ENCODE measurements at regions of chr9 and their contacts with region 1.

Region 1: GRCh38 chr9:5909976-5910375 is 19.3 kb downstream of the MLANA start:
- DNase-seq: no peak
- H3K4me3 Mint-ChIP-seq: peak overlapping the region; percentile 32
- H3K27ac Mint-ChIP-seq: peak overlapping the region; percentile 89
- H3K4me1 Mint-ChIP-seq: peaks cover 29% of the 10 kb centered on the region
- H3K27me3 Mint-ChIP-seq: no peaks in the 10 kb centered on the region

Region 2: DNA sequence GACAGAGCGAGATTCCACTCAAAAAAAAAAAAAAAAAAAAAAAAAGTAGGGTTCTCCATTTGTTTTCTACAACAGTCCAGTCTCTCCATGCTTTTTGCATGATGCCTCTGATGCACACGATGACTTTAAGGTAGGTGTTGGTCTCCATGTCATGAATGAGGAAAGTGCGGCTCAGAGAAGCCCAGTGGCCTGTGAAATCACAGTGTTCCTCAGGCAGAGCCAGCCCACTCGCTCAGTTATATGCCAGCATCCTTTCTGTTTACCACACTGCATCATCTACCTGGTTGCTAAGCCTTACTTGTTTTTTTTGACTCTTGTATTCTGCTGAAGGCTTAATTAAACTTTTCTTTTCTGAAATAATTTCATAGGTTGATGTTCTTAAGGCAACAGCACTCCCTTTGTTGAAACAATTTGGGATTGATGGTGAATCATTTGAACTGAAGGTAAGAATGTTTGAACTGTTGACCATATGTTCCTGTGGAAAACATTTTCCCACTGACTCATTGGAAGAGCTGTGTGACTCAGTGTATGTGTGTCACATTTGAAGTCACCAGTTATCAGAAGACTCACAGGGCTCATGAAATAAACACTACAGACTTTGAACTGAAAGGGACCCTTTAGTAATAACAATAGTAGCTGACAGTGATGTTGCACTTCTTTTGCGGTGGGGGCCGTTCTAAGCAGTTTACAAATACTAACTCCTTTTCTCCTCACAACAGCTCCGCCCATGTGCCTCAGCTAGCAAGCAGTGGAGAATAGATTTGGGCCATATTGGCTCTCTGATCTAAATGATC is 1077.0 kb before region 1 on chr9:
- CTCF ChIA-PET with region 1: no interaction called
- intact Hi-C with region 1: loop called (anchors 1 kb)
- DNase-seq: peak; percentile 80
- H3K4me3 Mint-ChIP-seq: no peak overlapping the region
- H3K27ac Mint-ChIP-seq: peak overlapping the region; percentile 85
- H3K4me1 Mint-ChIP-seq: peaks cover 46% of the 10 kb centered on the region
- H3K27me3 Mint-ChIP-seq: no peaks in the 10 kb centered on the region

Region 3: DNA sequence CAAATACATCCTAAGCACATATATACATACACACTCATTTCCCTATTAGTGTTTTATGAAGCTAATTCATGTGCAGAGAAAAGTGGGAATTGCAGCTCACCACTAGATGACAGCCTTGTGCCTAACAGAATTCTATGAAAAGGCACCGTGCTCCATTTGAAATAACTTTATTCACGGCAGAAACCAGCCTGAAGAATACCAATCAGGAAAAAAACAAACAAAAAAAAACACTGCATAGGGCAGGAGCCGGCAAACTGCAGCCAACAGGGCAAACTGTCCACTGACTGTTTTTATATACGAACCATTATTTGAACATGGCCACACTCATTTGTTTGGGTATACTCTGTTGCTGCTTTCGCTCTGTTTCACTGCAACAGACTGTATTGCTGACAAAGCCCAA is 110.7 kb before region 1 on chr9:
- CTCF ChIA-PET with region 1: no interaction called
- intact Hi-C with region 1: loop called (anchors 5 kb)
- DNase-seq: peak; percentile 42
- H3K4me3 Mint-ChIP-seq: no peak overlapping the region
- H3K27ac Mint-ChIP-seq: no peak overlapping the region
- H3K4me1 Mint-ChIP-seq: peaks cover 26% of the 10 kb centered on the region
- H3K27me3 Mint-ChIP-seq: no peaks in the 10 kb centered on the region

Region 4: GRCh38 chr9:5872511-5872910 is 37.5 kb before region 1 on chr9:
- CTCF ChIA-PET with region 1: no interaction called
- intact Hi-C with region 1: loop called (anchors 1 kb)
- DNase-seq: no peak
- H3K4me3 Mint-ChIP-seq: no peak overlapping the region
- H3K27ac Mint-ChIP-seq: no peak overlapping the region
- H3K4me1 Mint-ChIP-seq: peaks cover 12% of the 10 kb centered on the region
- H3K27me3 Mint-ChIP-seq: no peaks in the 10 kb centered on the region

Region 5: DNA sequence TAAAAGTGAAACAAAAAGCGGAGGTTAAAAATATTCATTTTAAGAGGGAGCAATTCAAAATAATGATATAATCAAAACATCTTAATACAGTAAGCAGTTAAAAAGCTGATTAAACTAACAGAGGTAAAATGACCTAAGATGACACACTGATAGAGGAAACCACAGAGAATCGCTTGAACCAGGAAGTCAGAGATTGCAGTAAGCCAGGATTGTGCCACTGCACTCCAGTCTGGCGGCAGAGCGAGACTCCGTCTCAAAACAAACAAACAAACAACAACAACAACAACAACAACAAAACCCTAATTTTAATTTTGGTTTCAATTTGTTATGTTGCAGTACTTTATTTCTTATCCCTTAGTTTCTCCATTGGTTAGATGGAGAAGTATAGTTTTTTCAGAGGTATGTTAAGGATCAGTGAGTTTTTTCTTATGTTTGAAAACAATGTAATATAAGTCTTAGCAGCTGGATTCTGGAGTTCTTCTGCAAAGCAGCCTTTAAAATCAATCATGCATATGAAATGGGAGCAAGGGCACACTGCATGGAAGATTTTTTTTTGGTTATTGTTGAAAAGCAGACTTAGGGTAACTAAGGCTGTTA is 39.2 kb after region 1 on chr9:
- CTCF ChIA-PET with region 1: no interaction called
- intact Hi-C with region 1: loop called (anchors 2 kb)
- DNase-seq: peak; percentile 24
- H3K4me3 Mint-ChIP-seq: no peak overlapping the region
- H3K27ac Mint-ChIP-seq: no peak overlapping the region
- H3K4me1 Mint-ChIP-seq: peaks cover 19% of the 10 kb centered on the region
- H3K27me3 Mint-ChIP-seq: no peaks in the 10 kb centered on the region

Region 6: DNA sequence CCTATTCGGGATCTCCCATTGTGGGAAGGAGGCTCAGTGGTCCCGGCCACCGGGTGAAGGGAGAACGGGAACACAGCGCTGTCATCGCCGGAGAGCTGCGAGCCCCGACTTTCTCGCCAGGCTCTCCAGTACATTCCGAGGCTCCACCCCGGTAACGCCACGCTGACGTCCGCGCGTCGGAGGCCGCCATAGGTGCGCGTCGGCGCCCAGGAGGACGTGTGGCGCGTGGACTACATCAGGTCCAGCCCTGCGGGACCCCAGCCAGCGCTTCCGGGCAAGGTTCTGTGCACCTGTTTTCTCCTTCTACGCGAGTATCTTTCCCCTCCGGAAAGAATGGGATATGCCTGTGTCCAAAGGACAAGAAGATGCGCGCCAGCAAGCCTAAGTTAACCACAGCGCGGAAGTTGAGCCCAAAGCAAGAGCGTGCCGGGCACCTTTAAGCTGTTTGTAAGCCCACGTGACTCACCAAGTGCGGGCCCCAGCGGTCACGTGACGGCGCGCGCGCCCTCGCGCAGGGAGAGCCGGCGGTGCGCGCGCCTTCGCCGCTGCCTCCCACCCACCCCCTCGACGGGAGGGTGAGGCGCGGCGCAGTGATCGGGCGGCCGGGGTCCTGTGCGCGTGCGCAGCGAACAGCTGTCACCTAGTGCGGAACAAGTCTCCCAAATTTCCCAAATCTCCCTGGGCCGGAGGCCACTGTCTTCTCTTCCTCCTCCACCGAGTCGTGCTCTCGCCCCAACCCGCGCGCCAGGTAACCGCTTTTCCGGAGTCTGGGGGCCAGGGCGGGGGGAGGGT is 847.7 kb after region 1 on chr9 and contains the start of gene KDM4C:
- CTCF ChIA-PET with region 1: no interaction called
- intact Hi-C with region 1: loop called (anchors 2 kb)
- DNase-seq: peak; percentile 93
- H3K4me3 Mint-ChIP-seq: peak within 1 kb of the TSS; percentile 86
- H3K27ac Mint-ChIP-seq: peak within 1 kb of the TSS; percentile 99
- H3K4me1 Mint-ChIP-seq: peaks cover 25% of the 10 kb centered on the region
- H3K27me3 Mint-ChIP-seq: no peaks in the 10 kb centered on the region
- total RNA-seq, gene KDM4C: 27.4 to 28.9 TPM

Measured in activated naive CD4-positive, alpha-beta T cell treated with anti-CD3 and anti-CD28 coated beads for 36 hours (primary cell).